Panc1 (cell line): ENCODE measurements at regions of chr6 and their contacts with region 1.

Region 1: GRCh38 chr6:44411141-44411540 is 23.6 kb downstream of the CDC5L start:
- DNase-seq: no peak
- ATAC-seq: no peak
- H3K4me3 ChIP-seq: no peak overlapping the region
- H3K27ac ChIP-seq: no peak overlapping the region
- H3K4me1 ChIP-seq: no peaks in the 10 kb centered on the region
- H3K27me3 ChIP-seq: no peaks in the 10 kb centered on the region
- CTCF ChIP-seq: no peak

Region 2: DNA sequence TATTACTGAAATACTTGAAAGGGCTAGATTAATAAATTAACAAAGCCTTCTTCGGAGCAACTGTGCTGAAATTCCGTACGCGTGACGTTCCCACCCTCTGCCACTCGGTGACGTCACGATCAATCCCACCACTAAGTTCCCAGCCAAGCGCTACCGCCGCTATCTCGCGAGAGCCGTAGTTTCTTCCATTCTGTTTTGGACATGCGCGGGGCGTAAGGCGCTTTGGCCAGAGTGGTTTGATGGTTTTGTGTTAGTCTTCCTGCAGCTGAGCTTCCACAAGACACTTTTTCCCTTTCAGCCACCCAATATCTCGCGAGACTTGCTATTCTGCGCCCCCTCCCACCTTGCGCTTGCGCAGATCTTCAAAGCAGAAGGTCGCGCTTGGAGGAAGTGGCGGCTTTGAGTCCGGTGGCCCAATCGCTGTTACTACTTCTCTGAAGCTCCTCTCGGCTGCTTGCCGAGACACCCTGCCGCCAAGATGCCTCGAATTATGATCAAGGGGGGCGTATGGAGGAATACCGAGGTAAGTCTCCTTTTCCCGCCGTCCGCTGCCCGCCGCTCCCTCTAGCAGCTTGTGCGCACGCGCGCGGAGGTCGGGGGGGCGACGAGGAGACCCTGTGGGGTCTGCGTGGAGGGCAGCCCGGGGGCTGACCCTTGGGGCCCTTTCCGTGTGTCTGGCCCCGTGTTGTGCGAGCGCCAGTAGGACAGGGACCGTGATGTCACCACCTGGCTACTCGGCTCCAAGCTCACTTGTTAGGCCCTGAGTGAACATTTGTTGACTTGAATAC is 23.6 kb before region 1 on chr6 and contains the start of gene CDC5L:
- CTCF ChIA-PET with region 1: no interaction called
- POLR2A ChIA-PET with region 1: interaction called, 10 read pairs
- in situ Hi-C with region 1: no loop called
- intact Hi-C with region 1: no loop called
- DNase-seq: peak; percentile 99
- ATAC-seq: peak; percentile 97
- H3K4me3 ChIP-seq: peak within 1 kb of the TSS; percentile 91
- H3K27ac ChIP-seq: peak within 1 kb of the TSS; percentile 97
- H3K4me1 ChIP-seq: peaks cover 21% of the 10 kb centered on the region; the same call in 1 of the 2 replicates
- H3K27me3 ChIP-seq: no peaks in the 10 kb centered on the region
- CTCF ChIP-seq: no peak
- total RNA-seq, gene CDC5L: 23.3 TPM

Region 3: GRCh38 chr6:44431118-44431725 is 20.1 kb after region 1 on chr6:
- CTCF ChIA-PET with region 1: no interaction called
- POLR2A ChIA-PET with region 1: no interaction called
- in situ Hi-C with region 1: no loop called
- intact Hi-C with region 1: no loop called
- DNase-seq: no peak
- ATAC-seq: peak; percentile 88
- H3K4me3 ChIP-seq: no peak overlapping the region
- H3K27ac ChIP-seq: no peak overlapping the region
- H3K4me1 ChIP-seq: no peaks in the 10 kb centered on the region
- H3K27me3 ChIP-seq: no peaks in the 10 kb centered on the region
- CTCF ChIP-seq: peak; percentile 76; the same call in 1 of the 2 replicates

Region 4: GRCh38 chr6:44606504-44606903 is 195.4 kb after region 1 on chr6:
- CTCF ChIA-PET with region 1: no interaction called
- POLR2A ChIA-PET with region 1: no interaction called
- in situ Hi-C with region 1: no loop called
- intact Hi-C with region 1: no loop called
- DNase-seq: no peak
- ATAC-seq: no peak
- H3K4me3 ChIP-seq: no peak overlapping the region
- H3K27ac ChIP-seq: no peak overlapping the region
- H3K4me1 ChIP-seq: no peaks in the 10 kb centered on the region
- H3K27me3 ChIP-seq: no peaks in the 10 kb centered on the region
- CTCF ChIP-seq: no peak